AG04449 (cell line): ENCODE measurements at regions of chr3 and their contacts with region 1.

Region 1: DNA sequence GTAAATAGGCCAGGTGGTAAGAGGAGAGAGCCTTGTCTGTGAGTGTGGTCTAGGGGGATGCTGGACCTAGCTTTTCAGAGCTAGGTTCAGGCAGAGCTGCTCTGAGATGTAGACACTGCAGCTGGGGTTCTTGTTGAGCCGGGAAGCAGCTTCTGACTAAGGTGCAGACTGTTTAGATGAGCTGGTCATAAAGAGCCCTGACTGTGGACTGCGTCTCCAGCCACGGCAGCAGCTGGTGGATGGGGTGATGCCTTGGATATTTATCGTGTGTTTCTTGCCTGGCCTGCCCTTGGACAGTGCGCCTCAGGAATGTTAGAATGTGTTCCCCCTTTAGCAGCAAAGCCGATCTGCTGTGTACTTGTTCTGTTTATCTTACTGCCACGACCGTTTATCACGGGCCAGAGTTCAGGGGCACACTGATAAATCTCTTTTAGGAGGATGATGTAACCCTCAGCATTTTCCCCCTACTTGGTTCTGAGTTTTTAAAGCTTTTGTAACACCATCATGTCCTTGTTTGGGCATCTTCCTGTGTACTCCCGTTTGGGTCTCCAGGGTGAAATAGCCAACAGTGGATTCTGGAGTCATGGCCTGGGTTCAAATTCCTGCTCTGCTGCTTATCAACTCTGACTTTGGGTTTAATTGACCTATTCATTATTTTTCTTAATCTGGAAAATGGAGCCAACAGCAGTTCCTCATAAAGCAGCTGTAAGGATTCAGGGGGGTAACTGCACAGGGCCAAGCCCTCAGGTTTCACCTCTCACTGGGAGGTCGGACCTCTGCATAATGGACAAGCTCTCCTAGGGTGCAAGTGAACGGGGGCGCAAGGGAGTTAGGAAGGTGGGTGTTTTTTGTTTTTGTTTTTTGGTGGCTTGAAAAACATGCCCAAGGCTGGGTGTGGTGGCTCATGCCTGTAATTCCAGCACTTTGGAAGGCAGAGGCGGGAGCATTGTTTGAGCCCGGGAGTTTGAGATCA is 51.4 kb downstream of the FLNB start:
- DNase-seq: peak; percentile 88
- H3K4me3 ChIP-seq: peak overlapping the region; percentile 18
- CTCF ChIP-seq: no peak

Region 2: DNA sequence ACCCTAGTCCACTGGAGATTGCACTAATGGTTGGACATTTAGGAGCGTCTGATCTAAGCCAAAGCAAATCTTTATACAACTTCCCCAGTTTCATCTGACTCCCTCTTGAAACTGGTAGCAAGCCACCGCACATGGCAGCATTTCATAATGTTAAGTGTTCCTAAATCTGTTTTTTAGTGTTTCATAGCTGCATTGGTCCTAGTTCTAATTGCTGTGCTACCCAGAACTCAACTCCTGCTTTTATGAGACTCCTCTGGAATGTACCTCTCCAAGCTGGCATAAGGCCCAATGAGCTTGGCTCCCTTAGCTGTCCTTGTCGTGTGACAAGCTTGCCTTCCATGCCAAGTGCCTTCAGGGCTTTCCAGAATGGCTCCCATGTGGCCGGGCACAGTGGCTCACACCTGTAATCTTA is 116.8 kb before region 1 on chr3:
- CTCF ChIA-PET with region 1: no interaction called
- POLR2A ChIA-PET with region 1: no interaction called
- DNase-seq: no peak
- H3K4me3 ChIP-seq: no peak overlapping the region
- CTCF ChIP-seq: no peak

Region 3: GRCh38 chr3:58049143-58049785 is 10.4 kb before region 1 on chr3:
- CTCF ChIA-PET with region 1: interaction called, 4 read pairs
- POLR2A ChIA-PET with region 1: interaction called, 21 read pairs
- DNase-seq: no peak
- H3K4me3 ChIP-seq: no peak overlapping the region
- CTCF ChIP-seq: no peak